ENCODE measurements at regions of chr20 and their contacts with region 1.

Region 1: GRCh38 chr20:17968366-17969279 is at the starts of genes MGME1 and SNX5:
- DNase-seq: peak; percentile 98 to 99 (median 99)
- ATAC-seq: peak; percentile 95
- H3K4me3 ChIP-seq: peak within 1 kb of the TSS; percentile 91
- H3K4me3 Mint-ChIP-seq: peak within 1 kb of the TSS; percentile 89 to 97 (median 94)
- H3K27ac ChIP-seq: peak within 1 kb of the TSS; percentile 96
- H3K27ac Mint-ChIP-seq: peak within 1 kb of the TSS; percentile 93 to 98 (median 97)
- H3K4me1 ChIP-seq: peaks cover 53 to 59% of the 10 kb centered on the region in 2 donors
- H3K4me1 Mint-ChIP-seq: peaks cover 54 to 76% (median 71%) of the 10 kb centered on the region in 7 donors
- H3K27me3 ChIP-seq: no peaks in the 10 kb centered on the region
- H3K27me3 Mint-ChIP-seq: no peaks in the 10 kb centered on the region
- total RNA-seq, gene MGME1: 4.9 to 41.0 (median 13.1) TPM
- total RNA-seq, gene SNX5: 41.4 to 148 (median 61.9) TPM

Region 2: DNA sequence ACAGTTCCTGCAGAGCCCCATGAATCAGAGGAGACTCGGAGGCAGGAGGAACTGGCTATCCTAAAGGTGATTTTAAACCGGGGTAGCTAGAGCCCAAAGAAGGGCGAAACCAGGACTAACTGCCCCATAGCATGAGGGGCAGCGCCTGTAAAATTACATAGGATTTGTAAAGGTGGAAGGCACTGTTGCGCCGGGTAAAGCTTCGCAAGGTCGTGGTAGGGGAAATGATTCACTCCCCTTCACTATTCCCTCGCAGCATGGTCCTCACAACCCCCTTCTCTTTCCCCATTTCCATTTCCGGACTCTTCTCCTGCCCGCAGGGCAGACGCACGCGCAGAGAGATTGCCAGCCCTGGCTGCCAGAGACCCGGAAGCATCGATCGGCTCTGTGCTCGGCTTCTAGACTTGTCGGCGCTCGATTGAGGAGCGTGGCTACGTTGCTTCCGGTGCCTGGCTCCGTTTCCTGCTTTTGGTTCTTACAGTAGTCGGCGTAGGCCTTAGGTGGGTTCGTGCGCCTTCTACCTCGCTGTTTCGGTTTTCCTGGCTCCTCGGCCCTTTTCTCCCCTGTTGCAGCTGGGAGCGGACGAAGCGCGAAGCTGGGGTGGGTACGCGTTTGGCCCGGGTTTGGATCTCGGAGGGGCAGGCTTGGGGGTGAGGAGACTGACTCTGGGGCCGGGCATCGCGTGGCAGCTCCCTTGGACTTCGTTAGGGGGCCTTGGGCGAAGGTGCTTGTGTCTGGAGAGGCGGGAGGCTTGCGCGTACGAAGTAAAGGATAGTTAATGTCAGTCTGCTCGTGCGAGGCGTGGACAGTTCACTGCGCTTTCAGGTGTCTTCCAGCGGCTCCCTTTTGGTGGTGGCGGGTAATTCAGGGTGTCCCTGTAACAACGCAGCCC is 1238.8 kb before region 1 on chr20 and contains the start of gene SNRPB2:
- CTCF ChIA-PET with region 1: no interaction called
- POLR2A ChIA-PET with region 1: no interaction called
- intact Hi-C with region 1: loop called in 1 of 2 experiments (anchors 2 kb)
- DNase-seq: peak; percentile 75 to 94 (median 90)
- ATAC-seq: peak; percentile 98
- H3K4me3 ChIP-seq: peak within 1 kb of the TSS; percentile 93
- H3K4me3 Mint-ChIP-seq: peak within 1 kb of the TSS; percentile 87 to 100 (median 99)
- H3K27ac ChIP-seq: peak within 1 kb of the TSS; percentile 94
- H3K27ac Mint-ChIP-seq: peak within 1 kb of the TSS; percentile 98 to 100 (median 100)
- H3K4me1 ChIP-seq: peaks cover 30 to 40% of the 10 kb centered on the region in 2 donors
- H3K4me1 Mint-ChIP-seq: peaks cover 32 to 60% (median 56%) of the 10 kb centered on the region in 7 donors
- H3K27me3 ChIP-seq: no peaks in the 10 kb centered on the region
- H3K27me3 Mint-ChIP-seq: peaks cover 9 to 25% (median 15%) of the 10 kb centered on the region in 5 donors
- total RNA-seq, gene SNRPB2: 30.8 to 97.0 (median 40.0) TPM

Region 3: DNA sequence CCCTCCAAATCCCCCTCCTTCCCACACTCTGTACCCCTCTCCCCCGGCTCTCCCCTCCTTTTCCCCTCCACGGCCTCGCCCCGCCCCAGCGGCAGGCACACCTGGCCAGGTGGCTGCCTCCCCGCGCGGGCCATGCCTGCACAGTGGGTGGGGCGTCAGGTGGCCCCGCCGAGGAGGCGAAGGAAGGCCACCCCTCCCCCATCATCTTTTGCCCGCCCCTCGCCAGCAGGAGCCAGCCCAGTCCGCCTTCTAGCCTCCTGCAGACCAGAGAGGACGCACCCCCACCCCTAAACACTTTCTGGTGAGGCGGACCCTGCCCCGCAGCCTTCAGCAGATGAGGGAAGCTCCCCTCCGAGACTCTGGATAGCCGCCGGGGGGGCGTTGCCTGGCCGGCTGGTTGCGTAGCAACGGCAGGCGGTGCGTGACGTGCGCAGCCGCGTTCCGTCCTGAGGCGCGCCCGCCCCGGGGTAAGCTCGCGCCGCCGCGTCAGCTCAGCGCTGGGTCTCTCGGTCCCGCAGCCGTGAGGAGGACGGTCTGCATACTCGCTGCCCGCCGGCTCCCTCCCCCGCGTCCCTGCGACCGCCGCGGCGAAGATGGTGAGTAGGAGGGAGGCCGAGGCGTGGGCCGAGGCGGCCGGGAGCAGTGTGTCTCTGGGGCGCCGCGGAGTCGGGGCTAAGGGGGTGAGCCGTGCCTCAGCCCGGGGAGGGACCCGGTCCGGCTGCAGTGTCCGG is 398.8 kb before region 1 on chr20 and contains the start of gene DSTN:
- CTCF ChIA-PET with region 1: interaction called, 3 read pairs
- POLR2A ChIA-PET with region 1: no interaction called
- intact Hi-C with region 1: loop called (anchors 1 kb)
- DNase-seq: peak; percentile 83 to 91 (median 89)
- ATAC-seq: peak; percentile 95
- H3K4me3 ChIP-seq: peak within 1 kb of the TSS; percentile 94
- H3K4me3 Mint-ChIP-seq: peak within 1 kb of the TSS; percentile 82 to 97 (median 95)
- H3K27ac ChIP-seq: peak within 1 kb of the TSS; percentile 85
- H3K27ac Mint-ChIP-seq: peak within 1 kb of the TSS; percentile 80 to 96 (median 91)
- H3K4me1 ChIP-seq: peaks cover 5 to 11% of the 10 kb centered on the region in 2 donors
- H3K4me1 Mint-ChIP-seq: peaks cover 17 to 44% (median 31%) of the 10 kb centered on the region in 7 donors
- H3K27me3 ChIP-seq: no peaks in the 10 kb centered on the region
- H3K27me3 Mint-ChIP-seq: peaks cover 0 to 14% (median 0%) of the 10 kb centered on the region in 5 donors
- total RNA-seq, gene DSTN: 28.7 to 63.6 (median 33.9) TPM

Region 4: DNA sequence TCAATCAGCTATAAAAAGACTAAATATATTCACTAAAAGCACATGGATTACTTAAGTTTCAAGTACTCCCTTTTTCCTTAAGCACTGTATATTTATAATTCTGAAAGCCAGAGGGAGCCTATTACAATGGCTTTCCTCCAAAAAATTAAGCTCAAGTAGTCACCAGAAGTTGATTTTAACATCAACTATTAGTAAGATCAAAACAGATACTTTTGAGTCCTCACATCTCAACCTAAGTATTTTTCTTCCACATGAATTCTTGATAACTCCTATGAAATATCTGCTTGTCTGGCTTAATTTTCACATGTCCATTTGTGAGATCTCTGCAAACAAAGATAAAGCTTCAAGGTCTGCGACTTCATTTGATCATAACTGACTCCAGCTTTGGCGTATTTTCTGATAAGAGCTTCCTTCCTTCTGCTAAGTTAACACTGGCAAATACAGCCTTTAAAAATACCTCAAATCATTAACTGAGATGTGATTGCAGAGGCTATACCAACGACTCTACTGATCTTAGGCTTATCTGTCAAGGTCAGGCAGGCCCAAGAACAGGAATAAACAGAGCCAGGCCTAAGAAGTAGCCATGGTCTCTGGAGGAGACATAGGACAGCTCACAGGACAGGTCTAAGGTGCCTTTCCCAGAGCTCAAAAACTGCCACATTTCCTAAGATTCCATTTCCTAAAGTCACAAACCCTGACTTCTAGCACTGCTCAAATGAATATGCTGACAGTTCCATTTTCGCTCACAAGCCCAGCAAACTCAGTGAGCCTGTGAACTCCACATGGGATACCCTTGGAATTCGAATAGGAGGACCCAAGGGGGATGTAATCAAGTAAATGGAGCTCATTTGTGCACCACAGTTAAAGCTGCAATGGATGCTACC is 10.0 kb before region 1 on chr20:
- CTCF ChIA-PET with region 1: interaction called, 18 read pairs
- POLR2A ChIA-PET with region 1: interaction called, 4 read pairs
- intact Hi-C with region 1: loop called (anchors 1 kb)
- DNase-seq: no peak
- ATAC-seq: no peak
- H3K4me3 ChIP-seq: no peak overlapping the region
- H3K4me3 Mint-ChIP-seq: peak overlapping the region in 5 of 10 donors; percentile 14 to 62 (median 49)
- H3K27ac ChIP-seq: peak overlapping the region; percentile 1
- H3K27ac Mint-ChIP-seq: peak overlapping the region in 5 of 9 donors; percentile 18 to 83 (median 60)
- H3K4me1 ChIP-seq: peaks cover 30 to 40% of the 10 kb centered on the region in 2 donors
- H3K4me1 Mint-ChIP-seq: peaks cover 50 to 82% (median 75%) of the 10 kb centered on the region in 7 donors
- H3K27me3 ChIP-seq: no peaks in the 10 kb centered on the region
- H3K27me3 Mint-ChIP-seq: no peaks in the 10 kb centered on the region

Region 5: DNA sequence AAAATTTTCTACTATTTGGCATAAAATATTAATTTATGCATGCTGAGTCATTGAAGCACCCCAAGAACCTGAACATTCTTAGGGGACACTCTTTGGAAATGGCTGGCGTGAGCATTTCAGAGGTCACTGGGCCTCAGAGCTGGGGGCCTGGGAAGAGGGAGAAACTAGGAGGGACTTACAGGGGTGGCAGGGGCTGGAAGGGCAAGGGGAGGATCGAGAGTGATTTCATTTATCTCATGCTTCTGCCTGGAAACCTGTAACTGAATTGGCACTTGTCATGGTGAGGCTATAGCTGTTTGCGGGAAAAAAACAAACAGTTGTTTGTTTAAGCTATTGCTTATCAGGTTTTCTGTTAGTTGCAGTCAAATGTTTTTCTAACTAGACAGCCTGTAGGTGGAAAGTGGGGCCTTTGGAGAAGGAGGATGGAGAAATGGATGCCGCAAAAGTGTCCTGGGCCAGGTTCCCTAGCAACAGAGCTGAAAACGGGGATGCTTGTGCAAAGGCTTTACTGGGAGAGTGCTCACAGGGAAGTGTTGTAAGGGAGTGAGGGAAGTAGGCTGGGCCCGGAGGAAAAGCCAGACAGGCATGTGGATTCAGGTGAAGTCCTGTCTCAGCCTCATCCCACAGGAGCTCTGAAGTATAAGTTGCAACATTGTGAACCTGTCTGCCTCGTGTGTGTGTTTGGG is 132.6 kb after region 1 on chr20:
- CTCF ChIA-PET with region 1: no interaction called
- POLR2A ChIA-PET with region 1: no interaction called
- intact Hi-C with region 1: no loop called
- DNase-seq: no peak
- ATAC-seq: no peak
- H3K4me3 ChIP-seq: no peak overlapping the region
- H3K4me3 Mint-ChIP-seq: no peak overlapping the region
- H3K27ac ChIP-seq: no peak overlapping the region
- H3K27ac Mint-ChIP-seq: no peak overlapping the region
- H3K4me1 ChIP-seq: no peaks in the 10 kb centered on the region
- H3K4me1 Mint-ChIP-seq: no peaks in the 10 kb centered on the region
- H3K27me3 ChIP-seq: no peaks in the 10 kb centered on the region
- H3K27me3 Mint-ChIP-seq: peaks cover 5 to 23% (median 16%) of the 10 kb centered on the region in 5 donors

Region 6: DNA sequence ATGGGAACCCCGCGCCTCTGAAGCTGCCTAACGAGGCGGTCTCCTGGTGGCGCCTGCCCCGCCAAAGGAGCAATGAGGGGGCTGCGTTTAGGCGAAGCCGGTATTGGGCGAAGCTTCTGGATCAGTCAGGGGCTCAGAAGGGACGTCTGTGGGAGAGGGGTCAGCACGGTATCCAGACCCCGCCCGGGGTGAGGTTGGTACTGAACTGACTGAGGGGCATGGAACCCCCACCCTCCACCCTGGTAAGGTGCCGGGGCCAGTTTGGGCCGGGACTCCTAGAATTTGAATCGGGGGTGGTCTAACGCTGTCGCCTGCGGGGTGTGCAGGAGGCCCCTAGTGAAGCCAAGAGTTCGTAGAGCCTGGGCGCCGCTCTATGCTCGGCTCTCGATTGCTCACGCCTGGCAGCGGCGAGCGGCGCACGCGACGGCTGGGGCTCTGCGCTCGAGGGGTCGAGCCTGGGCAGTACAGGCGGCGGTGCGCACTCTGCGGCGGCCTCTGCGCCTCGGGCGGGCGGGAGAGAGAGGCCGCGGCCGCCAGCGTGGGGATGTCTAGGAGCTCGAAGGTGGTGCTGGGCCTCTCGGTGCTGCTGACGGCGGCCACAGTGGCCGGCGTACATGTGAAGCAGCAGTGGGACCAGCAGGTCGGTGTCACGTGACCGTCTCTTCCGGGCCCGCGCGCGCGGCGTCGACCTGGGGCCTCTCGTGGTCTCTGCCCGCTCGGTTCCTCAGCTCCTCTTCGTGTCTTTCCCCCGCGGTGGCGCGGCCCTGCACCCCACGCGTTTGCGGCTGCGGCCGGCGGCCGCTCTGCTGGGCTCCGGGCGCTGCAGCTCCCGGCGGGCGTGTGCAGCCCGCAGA is 169.0 kb after region 1 on chr20 and contains the starts of genes KAT14 and PET117:
- CTCF ChIA-PET with region 1: no interaction called
- POLR2A ChIA-PET with region 1: interaction called, 4 read pairs
- intact Hi-C with region 1: loop called (anchors 1 kb)
- DNase-seq: peak; percentile 85 to 96 (median 93)
- ATAC-seq: peak; percentile 98
- H3K4me3 ChIP-seq: peak within 1 kb of the TSS; percentile 99
- H3K4me3 Mint-ChIP-seq: peak within 1 kb of the TSS; percentile 76 to 92 (median 88)
- H3K27ac ChIP-seq: peak within 1 kb of the TSS; percentile 89
- H3K27ac Mint-ChIP-seq: peak within 1 kb of the TSS; percentile 85 to 95 (median 92)
- H3K4me1 ChIP-seq: peaks cover 13 to 15% of the 10 kb centered on the region in 2 donors
- H3K4me1 Mint-ChIP-seq: peaks cover 23 to 44% (median 31%) of the 10 kb centered on the region in 7 donors
- H3K27me3 ChIP-seq: no peaks in the 10 kb centered on the region
- H3K27me3 Mint-ChIP-seq: peaks cover 0 to 7% (median 0%) of the 10 kb centered on the region in 5 donors
- total RNA-seq, gene KAT14: 12.3 to 26.7 (median 16.2) TPM
- total RNA-seq, gene PET117: 9.0 to 20.3 (median 11.7) TPM

Region 7: DNA sequence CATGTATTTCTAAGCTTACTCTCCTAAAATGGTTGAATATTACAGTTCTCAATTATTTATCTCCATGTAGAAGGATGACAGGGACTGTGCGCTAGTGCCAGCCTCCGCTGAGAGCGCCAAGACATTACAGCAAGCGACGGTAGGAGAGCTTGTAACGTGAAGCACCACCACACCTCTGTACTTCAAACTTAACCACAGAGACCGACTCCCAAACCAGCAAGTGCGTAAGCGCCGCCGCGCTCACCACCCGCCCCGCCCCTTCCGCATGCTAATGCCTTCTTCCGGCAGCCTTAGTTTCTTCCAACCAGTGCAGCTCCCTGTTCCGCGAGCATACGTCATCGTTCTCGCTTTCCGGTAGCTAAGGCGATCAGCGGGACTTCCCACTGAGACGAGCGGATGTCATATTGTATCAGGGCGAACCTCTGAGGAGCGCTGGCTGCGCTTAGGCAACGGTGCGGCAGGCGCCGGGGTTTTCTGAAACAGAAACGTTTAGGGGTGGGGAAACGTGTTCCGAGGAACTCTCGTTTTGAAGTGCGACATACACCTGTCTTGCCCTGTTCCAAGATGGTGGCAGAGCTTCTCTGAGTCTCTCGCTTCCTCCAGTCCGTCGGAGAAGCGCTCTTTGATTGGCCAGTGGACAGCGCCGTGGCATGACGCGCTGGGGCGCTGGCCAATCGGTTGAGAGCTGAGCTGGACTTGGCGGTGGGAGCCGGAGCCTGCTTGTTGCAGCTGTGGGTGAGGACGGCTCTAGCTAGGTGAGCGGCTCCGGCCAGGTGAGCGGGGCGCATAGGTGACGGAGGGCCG is 538.8 kb after region 1 on chr20 and contains the start of gene SEC23B:
- CTCF ChIA-PET with region 1: no interaction called
- POLR2A ChIA-PET with region 1: interaction called, 8 read pairs
- intact Hi-C with region 1: loop called (anchors 1 kb)
- DNase-seq: peak; percentile 88 to 100 (median 99)
- ATAC-seq: peak; percentile 91
- H3K4me3 ChIP-seq: peak within 1 kb of the TSS; percentile 74
- H3K4me3 Mint-ChIP-seq: peak within 1 kb of the TSS; percentile 91 to 100 (median 100)
- H3K27ac ChIP-seq: peak within 1 kb of the TSS; percentile 90
- H3K27ac Mint-ChIP-seq: peak within 1 kb of the TSS; percentile 99 to 100 (median 100)
- H3K4me1 ChIP-seq: peaks cover 17 to 28% of the 10 kb centered on the region in 2 donors
- H3K4me1 Mint-ChIP-seq: peaks cover 25 to 59% (median 50%) of the 10 kb centered on the region in 7 donors
- H3K27me3 ChIP-seq: no peaks in the 10 kb centered on the region
- H3K27me3 Mint-ChIP-seq: peaks cover 0 to 2% (median 0%) of the 10 kb centered on the region in 5 donors
- total RNA-seq, gene SEC23B: 39.0 to 102 (median 40.9) TPM

Region 8: DNA sequence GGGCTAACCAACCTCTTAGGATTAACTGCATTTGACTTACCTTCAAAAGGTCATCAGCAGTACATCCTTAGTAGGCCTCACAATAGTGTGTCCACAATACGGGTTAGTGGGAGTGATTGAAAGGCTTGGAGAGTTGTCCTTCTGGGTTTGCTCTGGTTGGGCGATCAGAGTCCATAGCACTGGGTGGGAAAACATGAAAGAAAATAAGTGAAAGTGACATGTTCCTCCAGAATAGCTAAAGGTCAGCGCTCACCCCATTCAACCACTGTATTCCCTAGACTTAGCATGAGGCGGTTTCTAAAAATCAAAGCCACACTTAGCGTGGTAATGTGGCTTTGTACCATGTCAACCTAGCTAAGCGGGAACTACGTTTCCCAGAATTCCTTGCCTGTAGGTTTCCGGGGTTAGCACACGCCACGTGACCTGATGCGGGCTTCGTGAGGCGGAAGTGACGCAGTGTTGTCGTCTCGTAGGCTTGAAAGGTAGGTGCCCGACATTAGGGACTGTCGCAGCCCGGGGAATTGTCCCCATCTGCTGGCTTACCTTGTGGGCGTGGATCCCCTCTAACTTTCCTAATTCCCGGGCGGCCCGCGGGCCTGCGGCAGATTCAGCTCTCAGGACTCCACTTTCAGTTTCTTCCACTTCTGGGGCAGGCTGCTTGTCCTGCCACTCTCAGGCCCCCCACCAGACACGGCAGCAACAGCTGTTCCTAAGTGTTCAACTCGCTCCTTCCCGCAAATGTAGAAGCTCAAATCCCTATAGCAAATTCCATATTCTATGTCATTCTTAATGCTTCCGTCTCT is 825.2 kb after region 1 on chr20:
- CTCF ChIA-PET with region 1: no interaction called
- POLR2A ChIA-PET with region 1: no interaction called
- intact Hi-C with region 1: loop called in 1 of 2 experiments (anchors 5 kb)
- DNase-seq: peak; percentile 62 to 94 (median 87)
- ATAC-seq: peak; percentile 99
- H3K4me3 ChIP-seq: peak overlapping the region; percentile 87
- H3K4me3 Mint-ChIP-seq: peak overlapping the region; percentile 85 to 99 (median 96)
- H3K27ac ChIP-seq: peak overlapping the region; percentile 92
- H3K27ac Mint-ChIP-seq: peak overlapping the region; percentile 97 to 100 (median 99)
- H3K4me1 ChIP-seq: peaks cover 8% of the 10 kb centered on the region in 2 donors
- H3K4me1 Mint-ChIP-seq: peaks cover 0 to 24% (median 18%) of the 10 kb centered on the region in 7 donors
- H3K27me3 ChIP-seq: no peaks in the 10 kb centered on the region
- H3K27me3 Mint-ChIP-seq: peaks cover 11 to 26% (median 21%) of the 10 kb centered on the region in 5 donors

Measured in naive thymus-derived CD4-positive, alpha-beta T cell (primary cell).